Transverse colon (tissue), 4 donors: ENCODE measurements at regions of chr19 and their contacts with region 1.

Region 1: DNA sequence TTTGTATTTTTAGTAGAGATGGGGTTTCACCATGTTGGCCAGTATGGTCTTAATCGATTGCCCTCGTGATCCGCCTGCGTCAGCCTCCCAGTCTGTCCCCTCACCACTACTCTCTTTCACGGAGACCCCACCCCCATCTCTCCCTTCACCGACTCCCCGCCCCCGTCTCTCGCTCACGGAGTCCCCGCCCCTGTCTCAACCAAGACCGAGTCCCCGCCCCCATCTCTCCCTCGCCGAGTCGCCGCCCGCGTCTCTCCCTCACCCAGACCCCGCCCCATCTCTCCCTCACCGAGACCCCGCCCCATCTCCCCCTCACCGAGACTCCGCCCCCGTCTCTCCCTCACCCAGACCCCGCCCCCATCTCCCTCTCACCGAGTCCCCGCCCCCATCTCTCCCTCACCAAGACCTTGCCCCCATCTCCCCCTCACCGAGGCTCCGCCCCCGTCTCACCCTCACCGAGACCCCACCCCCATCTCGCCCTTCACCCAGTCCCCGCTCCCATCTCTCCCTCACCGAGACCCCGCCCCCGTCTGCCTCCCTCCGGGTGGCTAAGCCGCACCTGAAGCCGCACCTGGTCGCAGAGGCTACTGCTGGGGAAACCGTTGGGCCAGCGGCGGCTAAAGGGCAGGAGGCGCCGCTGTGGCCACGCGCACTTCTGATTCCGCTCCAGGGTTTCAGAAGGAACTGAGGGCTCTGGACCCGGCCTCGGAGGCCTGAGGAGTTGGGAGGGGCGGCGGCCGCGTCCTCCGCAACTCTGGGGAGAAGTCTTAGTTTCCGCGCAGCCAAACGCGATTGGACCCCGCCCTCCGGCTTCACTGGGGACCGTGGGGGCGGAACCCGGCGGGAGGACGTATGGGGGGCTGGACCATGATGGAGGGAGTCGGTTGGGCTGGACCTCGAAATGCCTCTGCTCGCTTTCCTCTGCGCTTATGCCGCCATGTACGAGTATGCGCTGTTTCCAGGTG is 17.1 kb upstream of the ZNF846 start:
- DNase-seq: peak; percentile 99
- H3K4me3 ChIP-seq: peak overlapping the region; percentile 23 to 78 (median 72)
- H3K27ac ChIP-seq: peak overlapping the region; percentile 93 to 99 (median 98)
- H3K4me1 ChIP-seq: peaks cover 0 to 32% (median 21%) of the 10 kb centered on the region in 4 donors
- H3K27me3 ChIP-seq: no peaks in the 10 kb centered on the region
- CTCF ChIP-seq: no peak
- EP300 ChIP-seq: no peak
- POLR2A ChIP-seq: peak; percentile 96

Region 2: DNA sequence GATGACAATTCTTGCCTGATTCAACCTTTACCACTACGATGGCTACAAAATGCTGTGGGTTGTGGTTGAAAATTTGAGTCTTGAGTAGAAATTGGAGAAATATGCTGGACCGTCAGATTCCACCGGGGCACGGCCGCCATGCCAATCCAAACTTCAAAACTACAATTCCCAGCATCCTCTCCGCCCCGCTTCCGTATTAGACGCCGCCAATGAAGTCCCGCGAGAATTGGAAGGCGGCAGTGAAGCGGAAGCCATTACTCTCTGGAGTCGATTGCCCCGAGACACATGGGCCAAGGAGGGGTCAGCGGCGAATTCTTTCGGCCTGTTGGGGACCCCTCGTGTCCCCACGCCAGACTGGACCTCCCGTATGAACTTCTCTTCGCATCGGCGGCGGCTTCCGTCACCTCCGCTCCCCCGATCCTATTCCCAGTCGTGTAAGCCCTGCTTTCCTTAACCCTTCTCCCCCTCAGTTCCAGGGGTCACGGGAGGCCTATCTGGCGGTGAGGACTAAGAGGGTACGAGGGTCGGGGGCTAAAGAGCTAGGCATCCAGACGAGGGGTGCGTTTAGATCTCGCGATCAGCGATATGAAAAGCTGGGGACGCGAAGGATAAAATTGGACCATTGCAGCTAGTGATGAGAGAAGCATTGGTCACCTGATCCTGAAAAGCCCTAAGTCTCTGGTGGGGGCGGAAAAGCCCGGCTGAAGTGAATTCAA is 645.3 kb before region 1 on chr19 and contains the start of gene ZNF317:
- in situ Hi-C with region 1: loop called in 2 of 4 experiments (anchors 25 kb)
- intact Hi-C with region 1: no loop called
- DNase-seq: peak; percentile 95
- H3K4me3 ChIP-seq: peak within 1 kb of the TSS; percentile 71 to 88 (median 81)
- H3K27ac ChIP-seq: peak within 1 kb of the TSS; percentile 87 to 92 (median 91)
- H3K4me1 ChIP-seq: peaks cover 3 to 33% (median 16%) of the 10 kb centered on the region in 4 donors
- H3K27me3 ChIP-seq: no peaks in the 10 kb centered on the region
- CTCF ChIP-seq: no peak
- EP300 ChIP-seq: no peak
- POLR2A ChIP-seq: peak; percentile 53
- total RNA-seq, gene ZNF317: 20.6 to 25.1 (median 22.5) TPM

Region 3: DNA sequence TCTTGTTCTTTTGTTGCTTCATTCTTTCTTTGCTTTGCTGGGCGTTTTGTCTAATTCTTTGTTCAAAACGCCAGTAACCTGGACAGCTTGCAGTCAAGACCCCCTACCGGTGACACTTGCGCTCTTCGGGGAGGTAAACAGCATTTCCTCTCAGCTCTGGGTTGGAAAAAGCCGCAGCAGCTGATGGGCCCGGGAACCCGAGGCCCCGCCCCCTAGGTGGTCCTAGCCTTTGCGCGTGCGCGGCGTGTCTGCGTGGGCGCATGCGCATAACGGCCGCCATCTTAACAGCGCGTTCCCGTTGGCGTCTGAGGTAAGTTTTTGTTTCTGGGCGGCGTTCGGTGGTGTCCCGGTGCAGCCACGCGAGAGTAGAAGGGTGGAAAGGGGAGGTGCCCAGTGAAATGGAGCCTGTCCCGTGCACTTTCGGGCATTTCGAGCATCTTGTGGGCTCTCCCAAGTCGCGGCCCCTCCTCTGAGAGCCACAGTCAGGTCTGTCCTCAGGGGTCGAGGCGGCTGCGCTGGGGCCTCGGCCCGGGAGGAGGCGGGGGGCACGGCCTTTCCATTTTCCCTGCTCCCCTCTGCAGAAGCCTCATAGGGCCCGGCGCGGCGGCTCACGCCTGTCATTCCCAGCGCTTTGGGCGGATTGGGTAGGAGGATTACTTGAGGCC is 461.6 kb before region 1 on chr19 and contains the start of gene ZNF559:
- in situ Hi-C with region 1: loop called in 3 of 4 experiments (anchors 25 kb)
- intact Hi-C with region 1: loop called (anchors 10 kb)
- DNase-seq: peak; percentile 94
- H3K4me3 ChIP-seq: peak within 1 kb of the TSS; percentile 42 to 99 (median 59)
- H3K27ac ChIP-seq: peak within 1 kb of the TSS; percentile 91 to 94 (median 92)
- H3K4me1 ChIP-seq: peaks cover 0 to 11% (median 4%) of the 10 kb centered on the region in 4 donors
- H3K27me3 ChIP-seq: no peaks in the 10 kb centered on the region
- CTCF ChIP-seq: peak; percentile 10 to 51 (median 26)
- EP300 ChIP-seq: no peak
- POLR2A ChIP-seq: peak; percentile 26
- total RNA-seq, gene ZNF559: 4.4 to 106 (median 12.9) TPM

Region 4: DNA sequence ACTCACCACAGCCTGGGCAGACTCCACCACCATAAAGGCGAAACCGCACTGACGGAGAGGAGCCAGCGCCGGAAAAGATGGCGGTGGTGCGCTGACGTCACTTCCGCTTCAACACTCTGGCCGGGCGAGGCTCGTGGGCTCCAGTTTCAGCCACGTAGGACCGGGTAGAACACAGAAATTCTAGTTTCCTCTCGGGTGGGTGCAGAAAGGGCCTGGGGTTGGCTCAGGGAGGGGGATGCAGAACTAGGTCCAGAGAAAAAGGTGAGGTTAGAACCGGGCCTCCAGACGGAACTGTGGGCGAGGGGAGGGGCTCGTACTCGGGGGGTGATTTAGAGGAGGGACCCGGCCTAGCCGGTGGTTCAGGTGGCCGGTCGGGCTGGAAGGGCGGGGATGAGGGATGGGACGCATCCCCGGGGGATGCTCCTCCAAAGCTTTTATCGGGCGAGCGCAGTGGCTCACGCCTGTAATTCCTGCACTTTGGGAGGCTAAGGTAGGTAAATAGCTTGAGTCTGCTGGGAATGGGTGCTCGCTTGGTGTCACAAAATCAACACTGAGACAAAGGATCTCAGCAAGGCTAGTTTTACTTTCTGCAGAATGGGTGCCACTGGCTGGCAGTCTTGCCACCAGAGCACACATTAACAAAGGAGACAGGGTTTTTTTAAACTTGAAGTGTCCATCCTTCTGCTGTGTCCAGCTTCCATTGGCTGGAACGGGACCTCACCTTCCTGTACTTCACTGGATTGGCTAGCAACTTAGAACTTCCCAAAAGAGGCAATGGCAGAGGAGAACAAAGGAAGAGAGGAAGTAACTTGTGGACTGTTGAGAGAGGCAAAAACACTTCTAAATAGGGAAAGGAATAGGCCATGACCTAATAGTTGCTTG is 164.3 kb before region 1 on chr19 and contains the start of gene ZNF561:
- in situ Hi-C with region 1: loop called in 3 of 4 experiments (anchors 5 to 10 kb)
- intact Hi-C with region 1: loop called (anchors 1 kb)
- DNase-seq: peak; percentile 90
- H3K4me3 ChIP-seq: peak within 1 kb of the TSS; percentile 71 to 91 (median 80)
- H3K27ac ChIP-seq: peak within 1 kb of the TSS; percentile 89 to 93 (median 92)
- H3K4me1 ChIP-seq: peaks cover 5 to 25% (median 16%) of the 10 kb centered on the region in 4 donors
- H3K27me3 ChIP-seq: no peaks in the 10 kb centered on the region
- CTCF ChIP-seq: no peak
- EP300 ChIP-seq: no peak
- POLR2A ChIP-seq: peak; percentile 38
- total RNA-seq, gene ZNF561: 6.4 to 36.7 (median 26.0) TPM

Region 5: DNA sequence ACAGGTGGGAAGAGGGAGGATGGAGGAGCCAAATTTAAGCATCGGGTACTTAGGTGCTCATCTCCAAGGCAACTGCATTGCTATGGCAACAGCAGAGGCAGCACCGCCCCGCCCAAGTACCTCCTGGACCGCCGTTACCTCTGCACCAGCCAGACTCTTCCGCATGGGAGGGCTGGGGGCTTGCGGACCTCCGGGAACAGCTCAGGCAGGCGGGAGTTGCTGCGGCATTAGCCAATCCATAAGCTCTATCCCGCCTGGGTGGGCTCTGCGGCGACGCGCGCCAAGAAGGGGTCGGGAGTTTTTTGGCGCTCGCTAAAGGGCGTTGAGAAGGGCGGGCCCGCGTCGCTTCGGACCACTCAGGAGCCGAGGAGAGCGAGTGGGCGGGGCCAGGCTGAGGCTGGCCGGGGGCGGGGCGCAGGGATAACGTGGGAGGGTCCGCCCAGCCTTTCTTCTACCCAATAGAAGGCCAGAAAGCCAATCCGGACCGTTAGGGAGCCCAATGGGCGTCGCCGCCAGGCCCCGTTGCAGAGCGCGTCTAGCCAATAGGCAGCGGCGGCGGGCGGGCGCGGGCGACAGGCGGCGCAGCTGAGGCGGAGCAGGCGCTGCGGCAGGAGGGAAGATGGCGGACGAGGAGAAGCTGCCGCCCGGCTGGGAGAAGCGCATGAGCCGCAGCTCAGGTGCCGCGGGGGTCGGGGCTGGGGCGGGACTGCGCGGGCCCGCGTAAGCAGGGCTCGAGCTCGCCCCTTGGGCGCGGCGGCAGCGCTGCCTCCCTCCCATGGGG is 49.3 kb after region 1 on chr19 and contains the start of gene PIN1:
- in situ Hi-C with region 1: no loop called
- intact Hi-C with region 1: no loop called
- DNase-seq: peak; percentile 100
- H3K4me3 ChIP-seq: peak within 1 kb of the TSS; percentile 62 to 99 (median 90)
- H3K27ac ChIP-seq: peak within 1 kb of the TSS; percentile 79 to 89 (median 84)
- H3K4me1 ChIP-seq: peaks cover 8 to 13% (median 10%) of the 10 kb centered on the region in 4 donors
- H3K27me3 ChIP-seq: no peaks in the 10 kb centered on the region
- CTCF ChIP-seq: peak in 4 of 5 experiments; percentile 58 to 73 (median 60)
- EP300 ChIP-seq: no peak
- POLR2A ChIP-seq: peak; percentile 29
- total RNA-seq, gene PIN1: 22.9 to 82.5 (median 43.7) TPM

Region 6: DNA sequence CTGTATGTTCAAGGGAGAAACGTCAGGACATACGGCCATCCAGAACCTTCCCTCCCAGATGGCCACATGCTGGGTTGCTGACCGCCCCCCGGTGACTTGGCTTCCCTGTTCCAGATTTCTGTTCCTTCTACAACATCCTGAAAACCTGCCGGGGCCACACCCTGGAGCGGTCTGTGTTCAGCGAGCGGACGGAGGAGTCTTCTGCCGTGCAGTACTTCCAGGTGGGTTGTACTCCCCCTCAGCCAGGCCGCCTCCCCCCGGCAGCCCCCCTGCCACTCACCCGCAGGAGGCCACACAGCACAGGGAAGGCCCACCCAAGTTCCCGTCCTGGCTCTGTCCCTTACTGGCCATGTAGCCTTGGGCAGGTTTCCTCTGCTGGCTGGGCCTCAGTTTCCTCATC is 1122.3 kb after region 1 on chr19:
- in situ Hi-C with region 1: no loop called
- intact Hi-C with region 1: loop called (anchors 10 kb)
- DNase-seq: no peak
- H3K4me3 ChIP-seq: no peak overlapping the region
- H3K27ac ChIP-seq: no peak overlapping the region
- H3K4me1 ChIP-seq: no peaks in the 10 kb centered on the region
- H3K27me3 ChIP-seq: no peaks in the 10 kb centered on the region
- CTCF ChIP-seq: no peak
- EP300 ChIP-seq: no peak
- POLR2A ChIP-seq: no peak